Activated T-helper 2 cell treated with anti-CD3 and anti-CD28 coated beads, Interferon-gamma antibody, Interleukin-2, Interleukin-4, amounts not matched to agents 10 μg/mL and 5 μg/mL and 100 μg/mL, durations not matched to agents 14 hours and 24 hours and 36 hours (primary cell): ENCODE measurements at regions of chr1 and their contacts with region 1.

Region 1: GRCh38 chr1:31182352-31182751 is 57.3 kb downstream of the NKAIN1 start:
- DNase-seq: peak; percentile 34
- H3K4me3 Mint-ChIP-seq: peak overlapping the region; percentile 37
- H3K27ac Mint-ChIP-seq: no peak overlapping the region
- H3K4me1 Mint-ChIP-seq: peaks cover 4% of the 10 kb centered on the region
- H3K27me3 Mint-ChIP-seq: peaks cover 18% of the 10 kb centered on the region

Region 2: GRCh38 chr1:30856260-30856790 is 326.0 kb before region 1 on chr1:
- intact Hi-C with region 1: no loop called
- DNase-seq: no peak
- H3K4me3 Mint-ChIP-seq: no peak overlapping the region
- H3K27ac Mint-ChIP-seq: no peak overlapping the region
- H3K4me1 Mint-ChIP-seq: peaks cover 1% of the 10 kb centered on the region
- H3K27me3 Mint-ChIP-seq: peaks cover 2% of the 10 kb centered on the region

Region 3: GRCh38 chr1:31335007-31335406 is 152.7 kb after region 1 on chr1:
- intact Hi-C with region 1: loop called (anchors 5 kb)
- DNase-seq: no peak
- H3K4me3 Mint-ChIP-seq: no peak overlapping the region
- H3K27ac Mint-ChIP-seq: no peak overlapping the region
- H3K4me1 Mint-ChIP-seq: no peaks in the 10 kb centered on the region
- H3K27me3 Mint-ChIP-seq: no peaks in the 10 kb centered on the region

Region 4: DNA sequence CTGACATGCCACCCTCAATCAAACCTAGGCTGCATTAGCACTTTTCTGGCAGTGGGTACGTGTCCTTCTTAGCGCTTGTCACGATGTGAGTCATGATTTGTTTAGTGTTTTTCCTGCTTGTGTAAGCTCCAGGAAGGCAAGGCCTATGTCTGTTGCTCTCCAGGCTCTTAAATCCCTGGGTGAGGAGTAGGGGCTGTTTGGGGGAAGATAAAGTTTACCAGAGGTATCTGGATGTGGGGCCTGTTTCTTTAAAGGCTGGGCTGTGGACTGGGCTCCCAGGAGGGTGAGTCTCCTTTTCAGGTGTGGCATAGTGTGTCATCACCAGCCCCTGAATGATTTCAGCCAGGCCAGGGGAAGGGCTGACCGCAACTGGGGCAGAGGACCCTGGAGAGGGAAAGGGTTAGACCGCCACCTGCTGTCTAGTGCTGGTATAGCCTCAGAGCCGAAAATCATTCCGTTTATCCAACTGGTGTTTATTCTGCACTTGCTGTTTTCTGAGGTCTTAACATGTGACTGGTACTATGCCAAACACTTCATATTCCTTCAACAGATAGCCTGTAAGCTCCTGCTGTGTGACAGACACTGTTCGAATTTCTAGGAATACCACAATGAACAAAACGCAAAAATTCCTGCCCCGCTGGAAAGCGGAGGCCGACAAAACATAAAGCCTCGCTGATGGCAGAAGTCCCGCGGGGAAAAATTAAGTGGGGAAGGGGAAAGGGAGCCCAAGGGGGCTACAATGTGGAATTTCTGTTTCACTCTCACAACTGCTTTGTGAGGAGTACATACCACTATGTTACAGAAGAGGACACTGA is 240.4 kb after region 1 on chr1:
- intact Hi-C with region 1: loop called (anchors 5 kb)
- DNase-seq: peak; percentile 46
- H3K4me3 Mint-ChIP-seq: no peak overlapping the region
- H3K27ac Mint-ChIP-seq: no peak overlapping the region
- H3K4me1 Mint-ChIP-seq: peaks cover 8% of the 10 kb centered on the region
- H3K27me3 Mint-ChIP-seq: peaks cover 19% of the 10 kb centered on the region

Region 5: GRCh38 chr1:32870615-32871363 is 1688.4 kb after region 1 on chr1 and contains the start of gene FNDC5:
- intact Hi-C with region 1: no loop called
- DNase-seq: no peak
- H3K4me3 Mint-ChIP-seq: peak within 1 kb of the TSS; percentile 55
- H3K27ac Mint-ChIP-seq: no peak within 1 kb of the TSS
- H3K4me1 Mint-ChIP-seq: peaks cover 5% of the 10 kb centered on the region
- H3K27me3 Mint-ChIP-seq: peaks cover 40% of the 10 kb centered on the region
- total RNA-seq, gene FNDC5: not detected in 2 replicates